Sigmoid colon (tissue), 7 donors: ENCODE measurements at regions of chr12 and their contacts with region 1.

Region 1: DNA sequence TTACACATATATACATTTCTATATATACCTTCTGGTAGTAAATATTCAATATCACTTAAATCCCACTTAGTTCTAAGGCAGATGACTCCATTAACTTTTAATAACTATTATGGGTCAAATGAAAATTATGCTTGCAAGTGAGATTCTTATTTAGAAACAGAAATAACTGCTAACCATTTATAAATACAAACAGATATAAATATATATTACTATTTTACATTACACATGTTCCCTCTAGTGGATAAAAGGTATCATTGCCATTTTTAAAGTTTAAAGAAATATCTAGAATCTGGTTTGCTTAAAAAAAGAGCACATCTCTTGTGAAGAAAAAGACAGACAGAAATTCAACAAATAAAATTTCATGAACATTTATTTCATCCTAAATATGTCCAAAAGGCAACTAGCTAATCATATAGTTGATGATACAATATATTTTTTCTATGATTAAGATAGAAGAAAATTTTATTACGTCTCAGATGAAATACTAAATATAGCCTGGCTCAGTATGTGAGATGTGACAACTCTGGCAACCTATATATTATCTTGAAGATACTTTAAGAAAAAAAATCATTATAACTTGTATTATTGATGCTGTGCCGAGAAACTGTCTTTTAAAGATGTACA is 11.7 kb upstream of the RAD51AP1 start:
- DNase-seq: no peak
- H3K4me3 ChIP-seq: no peak overlapping the region
- H3K27ac ChIP-seq: no peak overlapping the region
- H3K4me1 ChIP-seq: no peaks in the 10 kb centered on the region
- H3K27me3 ChIP-seq: no peaks in the 10 kb centered on the region
- CTCF ChIP-seq: peak in 3 of 4 experiments; percentile 34 to 60 (median 51)
- EP300 ChIP-seq: no peak
- POLR2A ChIP-seq: no peak

Region 2: GRCh38 chr12:3885277-3886094 is 641.5 kb before region 1 on chr12:
- intact Hi-C with region 1: loop called (anchors 5 kb)
- DNase-seq: no peak
- H3K4me3 ChIP-seq: peak overlapping the region; percentile 15 to 39 (median 34)
- H3K27ac ChIP-seq: peak overlapping the region; percentile 67 to 72 (median 68)
- H3K4me1 ChIP-seq: peaks cover 0 to 10% (median 0%) of the 10 kb centered on the region in 4 donors
- H3K27me3 ChIP-seq: no peaks in the 10 kb centered on the region
- CTCF ChIP-seq: peak; percentile 57 to 83 (median 76)
- EP300 ChIP-seq: no peak
- POLR2A ChIP-seq: no peak

Region 3: GRCh38 chr12:4353785-4354208 is 173.2 kb before region 1 on chr12:
- intact Hi-C with region 1: loop called (anchors 2 kb)
- DNase-seq: no peak
- H3K4me3 ChIP-seq: no peak overlapping the region
- H3K27ac ChIP-seq: no peak overlapping the region
- H3K4me1 ChIP-seq: no peaks in the 10 kb centered on the region
- H3K27me3 ChIP-seq: no peaks in the 10 kb centered on the region
- CTCF ChIP-seq: peak in 3 of 4 experiments; percentile 44 to 55 (median 50)
- EP300 ChIP-seq: no peak
- POLR2A ChIP-seq: no peak